SK-N-SH (cell line): ENCODE measurements at regions of chr11 and their contacts with region 1.

Region 1: GRCh38 chr11:106087815-106088435 is 10.5 kb downstream of the AASDHPPT start:
- DNase-seq: peak; percentile 15
- H3K4me3 ChIP-seq: peak overlapping the region in 1 of 2 experiments; percentile 27; a peak in 1 of 4 replicates
- H3K27ac ChIP-seq: no peak overlapping the region
- H3K4me1 ChIP-seq: peaks cover 0 to 8% of the 10 kb centered on the region in 2 experiments; a peak in 2 of 4 replicates
- H3K27me3 ChIP-seq: no peaks in the 10 kb centered on the region
- CTCF ChIP-seq: peak; percentile 97
- EP300 ChIP-seq: no peak
- RAD21 ChIP-seq: peak; percentile 84

Region 2: GRCh38 chr11:105811242-105811641 is 276.7 kb before region 1 on chr11:
- CTCF ChIA-PET with region 1: no interaction called
- POLR2A ChIA-PET with region 1: no interaction called
- DNase-seq: no peak
- H3K4me3 ChIP-seq: no peak overlapping the region
- H3K27ac ChIP-seq: no peak overlapping the region
- H3K4me1 ChIP-seq: no peaks in the 10 kb centered on the region
- H3K27me3 ChIP-seq: no peaks in the 10 kb centered on the region
- CTCF ChIP-seq: no peak
- EP300 ChIP-seq: no peak
- RAD21 ChIP-seq: no peak

Region 3: GRCh38 chr11:106101370-106101769 is 13.4 kb after region 1 on chr11:
- CTCF ChIA-PET with region 1: interaction called, 16 read pairs
- POLR2A ChIA-PET with region 1: no interaction called
- DNase-seq: no peak
- H3K4me3 ChIP-seq: no peak overlapping the region
- H3K27ac ChIP-seq: no peak overlapping the region
- H3K4me1 ChIP-seq: no peaks in the 10 kb centered on the region
- H3K27me3 ChIP-seq: no peaks in the 10 kb centered on the region
- CTCF ChIP-seq: no peak
- EP300 ChIP-seq: no peak
- RAD21 ChIP-seq: no peak

Region 4: DNA sequence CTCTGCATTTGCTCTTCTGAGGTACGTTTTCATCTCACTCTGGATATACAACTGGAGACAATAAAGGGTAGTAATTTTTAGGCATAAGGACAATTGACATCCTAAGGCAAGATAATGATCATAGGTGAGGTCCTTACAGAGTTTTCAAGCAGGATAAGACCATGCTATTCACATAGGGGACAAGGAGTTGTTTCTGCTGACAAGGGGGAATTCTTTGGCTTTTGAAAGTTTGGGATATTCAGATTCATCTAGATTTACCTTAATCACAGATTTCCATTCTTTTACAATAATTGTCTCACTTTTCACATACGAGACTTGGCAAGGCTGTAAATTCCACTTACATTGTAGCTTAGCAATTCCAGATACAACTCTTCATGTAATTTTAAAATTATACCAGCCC is 245.8 kb after region 1 on chr11:
- CTCF ChIA-PET with region 1: no interaction called
- POLR2A ChIA-PET with region 1: no interaction called
- DNase-seq: no peak
- H3K4me3 ChIP-seq: no peak overlapping the region
- H3K27ac ChIP-seq: no peak overlapping the region
- H3K4me1 ChIP-seq: no peaks in the 10 kb centered on the region
- H3K27me3 ChIP-seq: no peaks in the 10 kb centered on the region
- CTCF ChIP-seq: no peak
- EP300 ChIP-seq: no peak
- RAD21 ChIP-seq: no peak